Activated T-helper 2 cell treated with anti-CD3 and anti-CD28 coated beads, Interferon-gamma antibody, Interleukin-2, Interleukin-4, amounts not matched to agents 10 μg/mL and 5 μg/mL and 100 μg/mL, durations not matched to agents 14 hours and 24 hours and 36 hours (primary cell): ENCODE measurements at regions of chr17 and their contacts with region 1.

Region 1: GRCh38 chr17:2416010-2416734 is 15.3 kb upstream of the MNT start:
- DNase-seq: peak; percentile 74
- H3K4me3 Mint-ChIP-seq: no peak overlapping the region
- H3K27ac Mint-ChIP-seq: no peak overlapping the region
- H3K4me1 Mint-ChIP-seq: no peaks in the 10 kb centered on the region
- H3K27me3 Mint-ChIP-seq: no peaks in the 10 kb centered on the region

Region 2: GRCh38 chr17:2386400-2387085 is 29.6 kb before region 1 on chr17:
- intact Hi-C with region 1: loop called (anchors 1 kb)
- DNase-seq: no peak
- H3K4me3 Mint-ChIP-seq: no peak overlapping the region
- H3K27ac Mint-ChIP-seq: no peak overlapping the region
- H3K4me1 Mint-ChIP-seq: peaks cover 15% of the 10 kb centered on the region
- H3K27me3 Mint-ChIP-seq: no peaks in the 10 kb centered on the region

Region 3: GRCh38 chr17:2401426-2402221 is 14.5 kb before region 1 on chr17:
- intact Hi-C with region 1: loop called (anchors 2 kb)
- DNase-seq: peak; percentile 99
- H3K4me3 Mint-ChIP-seq: peak overlapping the region; percentile 89
- H3K27ac Mint-ChIP-seq: peak overlapping the region; percentile 97
- H3K4me1 Mint-ChIP-seq: peaks cover 44% of the 10 kb centered on the region
- H3K27me3 Mint-ChIP-seq: no peaks in the 10 kb centered on the region